Dendritic cell treated with granulocyte-macrophage colony-stimulating factor and Interleukin-4, amounts not matched to agents 40 ng/mL and 50 ng/mL, for 4 days (primary cell): ENCODE measurements at regions of chr4 and their contacts with region 1.

Region 1: DNA sequence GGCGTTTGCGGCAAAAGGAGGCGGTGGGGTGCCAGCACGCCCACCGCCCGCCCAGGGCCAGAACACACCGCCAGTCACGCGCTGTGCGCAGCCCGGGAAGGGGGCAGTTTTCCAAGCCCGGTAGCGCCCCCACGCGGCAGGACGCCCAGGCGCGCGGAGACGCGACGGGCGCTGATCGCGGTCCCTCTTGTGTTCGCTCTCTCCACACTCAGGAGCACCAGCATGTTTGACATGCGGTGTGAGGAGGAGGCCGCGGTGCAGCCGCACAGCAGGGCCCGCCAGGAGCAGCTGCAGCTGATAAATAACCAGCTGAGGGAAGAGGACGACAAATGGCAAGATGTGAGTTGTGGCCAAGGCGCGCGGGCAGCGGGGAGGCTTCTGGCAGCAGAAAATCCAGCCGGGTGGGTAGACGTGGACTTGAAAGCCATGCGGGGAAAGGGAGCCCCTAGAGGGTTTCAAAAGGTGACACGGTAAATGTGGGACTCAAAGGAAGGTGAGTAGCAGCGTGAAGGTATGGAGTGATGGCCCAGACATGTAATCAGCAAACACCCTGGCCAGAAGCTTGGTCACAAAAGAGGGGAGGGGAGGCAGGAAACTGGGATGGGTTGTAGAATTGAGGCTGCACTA is 104.1 kb downstream of the PHOX2B start:
- H3K4me3 Mint-ChIP-seq: peak overlapping the region; percentile 32
- H3K27ac Mint-ChIP-seq: no peak overlapping the region
- H3K4me1 Mint-ChIP-seq: peaks cover 34% of the 10 kb centered on the region
- H3K27me3 Mint-ChIP-seq: peaks cover 36% of the 10 kb centered on the region

Region 2: DNA sequence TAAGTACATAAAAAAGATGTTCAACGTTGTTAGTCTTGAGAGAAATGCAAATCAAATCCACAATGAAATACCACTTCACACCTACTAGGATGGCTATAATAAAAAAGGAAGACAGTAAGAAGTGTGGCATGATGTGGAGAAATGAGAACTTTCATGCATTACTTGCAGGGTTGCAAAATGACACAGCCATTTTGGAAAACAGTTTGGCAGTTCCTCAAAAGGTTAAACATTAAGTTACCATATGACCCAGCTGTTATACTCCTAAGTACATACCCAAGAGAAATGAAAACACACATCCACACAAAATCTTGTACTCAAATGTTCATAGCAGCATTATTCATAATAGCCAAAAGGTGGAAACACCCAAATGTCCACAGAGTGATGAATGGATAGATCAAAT is 132.3 kb before region 1 on chr4:
- intact Hi-C with region 1: loop called (anchors 10 kb)
- H3K4me3 Mint-ChIP-seq: no peak overlapping the region
- H3K27ac Mint-ChIP-seq: peak overlapping the region; percentile 37
- H3K4me1 Mint-ChIP-seq: peaks cover 64% of the 10 kb centered on the region
- H3K27me3 Mint-ChIP-seq: no peaks in the 10 kb centered on the region

Region 3: GRCh38 chr4:41600243-41600912 is 44.0 kb before region 1 on chr4:
- intact Hi-C with region 1: no loop called
- H3K4me3 Mint-ChIP-seq: no peak overlapping the region
- H3K27ac Mint-ChIP-seq: no peak overlapping the region
- H3K4me1 Mint-ChIP-seq: peaks cover 5% of the 10 kb centered on the region
- H3K27me3 Mint-ChIP-seq: no peaks in the 10 kb centered on the region

Region 4: DNA sequence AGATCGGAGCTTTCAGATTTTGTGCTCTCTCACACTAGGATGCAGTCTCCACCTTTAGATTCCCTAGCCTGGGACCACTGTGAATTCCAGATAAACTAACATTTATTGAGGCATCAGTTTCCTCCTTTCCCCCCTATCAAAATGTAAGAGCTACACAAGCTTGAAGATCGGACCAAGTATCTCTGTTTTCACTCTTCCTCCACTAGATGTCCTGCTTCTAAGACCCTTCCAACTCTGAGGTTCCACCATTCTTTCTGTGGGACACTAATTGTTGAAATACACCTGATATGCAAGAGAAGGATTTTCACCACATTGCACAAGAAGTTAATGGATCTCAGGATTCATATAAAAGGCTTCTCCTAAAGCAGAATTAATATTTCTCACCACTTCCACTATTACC is 147.2 kb after region 1 on chr4:
- intact Hi-C with region 1: no loop called
- H3K4me3 Mint-ChIP-seq: no peak overlapping the region
- H3K27ac Mint-ChIP-seq: no peak overlapping the region
- H3K4me1 Mint-ChIP-seq: peaks cover 5% of the 10 kb centered on the region
- H3K27me3 Mint-ChIP-seq: peaks cover 21% of the 10 kb centered on the region

Region 5: DNA sequence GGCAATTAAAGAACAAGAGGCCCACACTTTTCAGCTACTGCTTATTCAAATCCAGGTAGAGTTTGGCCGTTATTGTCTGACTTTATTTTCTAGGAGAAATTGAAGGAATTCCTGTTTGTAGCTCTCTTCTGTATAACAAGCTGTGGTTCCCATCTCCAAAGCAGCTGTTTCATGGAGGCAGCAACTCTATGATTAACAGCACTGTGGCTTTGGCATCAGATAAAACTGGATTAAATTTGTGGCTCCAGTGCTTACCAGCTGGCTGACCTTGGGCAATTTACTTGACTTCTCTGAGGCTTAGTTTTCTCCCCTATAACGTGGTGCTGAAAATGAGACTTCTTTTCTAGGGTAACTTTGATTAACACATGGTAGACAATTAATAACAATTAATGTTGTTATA is 374.1 kb after region 1 on chr4:
- intact Hi-C with region 1: no loop called
- H3K4me3 Mint-ChIP-seq: no peak overlapping the region
- H3K27ac Mint-ChIP-seq: no peak overlapping the region
- H3K4me1 Mint-ChIP-seq: peaks cover 11% of the 10 kb centered on the region
- H3K27me3 Mint-ChIP-seq: no peaks in the 10 kb centered on the region